Cardiac septum (tissue), 1 donor: ENCODE measurements at regions of chr3 and their contacts with region 1.

Region 1: GRCh38 chr3:138915503-138916498 is 31.1 kb downstream of the FOXL2 start:
- DNase-seq: peak; percentile 96

Region 2: DNA sequence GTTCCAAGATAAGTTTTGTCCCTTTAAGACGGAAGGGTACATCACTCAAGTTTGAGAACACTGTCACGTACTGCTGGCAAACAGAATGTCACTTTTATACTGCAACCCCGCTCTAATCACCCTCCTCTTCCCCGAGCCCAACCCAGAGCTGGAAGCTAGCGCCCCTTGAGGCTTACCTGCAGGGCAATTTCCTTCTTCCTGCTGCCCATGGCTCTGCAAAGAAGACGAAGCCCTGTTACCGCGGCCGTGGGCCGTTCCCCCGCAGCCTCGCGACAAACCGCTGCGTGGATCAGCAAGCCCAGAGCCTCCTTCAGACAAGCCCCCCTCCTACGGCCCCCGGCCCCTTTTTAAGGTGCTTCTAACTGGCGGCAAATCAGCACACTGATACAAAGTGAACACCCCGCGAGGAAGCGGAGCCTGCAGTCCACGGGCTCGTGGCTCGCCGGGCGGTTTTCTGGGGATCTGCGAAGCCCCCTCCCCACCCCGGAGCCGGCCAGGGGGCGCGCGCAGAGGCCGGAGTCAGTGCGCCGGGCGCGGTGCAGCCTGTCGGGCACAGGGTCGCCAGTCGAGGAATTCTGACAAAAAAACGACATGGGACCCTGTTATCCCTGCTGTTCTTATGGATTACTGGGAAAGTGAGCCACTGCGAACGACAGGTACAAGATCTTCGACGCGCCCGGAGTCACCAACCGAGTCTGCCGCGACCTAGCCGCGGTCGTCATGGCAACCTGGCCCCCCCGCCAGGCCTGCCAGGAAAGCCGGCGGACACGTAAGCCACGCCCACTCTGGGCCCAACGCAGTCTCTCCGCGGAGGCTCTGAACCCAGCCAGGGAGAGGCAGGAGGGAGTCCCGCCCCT is 586.4 kb before region 1 on chr3 and contains the start of gene NME9:
- intact Hi-C with region 1: loop called (anchors 10 kb)
- DNase-seq: peak; percentile 93
- total RNA-seq, gene NME9: not detected

Region 3: DNA sequence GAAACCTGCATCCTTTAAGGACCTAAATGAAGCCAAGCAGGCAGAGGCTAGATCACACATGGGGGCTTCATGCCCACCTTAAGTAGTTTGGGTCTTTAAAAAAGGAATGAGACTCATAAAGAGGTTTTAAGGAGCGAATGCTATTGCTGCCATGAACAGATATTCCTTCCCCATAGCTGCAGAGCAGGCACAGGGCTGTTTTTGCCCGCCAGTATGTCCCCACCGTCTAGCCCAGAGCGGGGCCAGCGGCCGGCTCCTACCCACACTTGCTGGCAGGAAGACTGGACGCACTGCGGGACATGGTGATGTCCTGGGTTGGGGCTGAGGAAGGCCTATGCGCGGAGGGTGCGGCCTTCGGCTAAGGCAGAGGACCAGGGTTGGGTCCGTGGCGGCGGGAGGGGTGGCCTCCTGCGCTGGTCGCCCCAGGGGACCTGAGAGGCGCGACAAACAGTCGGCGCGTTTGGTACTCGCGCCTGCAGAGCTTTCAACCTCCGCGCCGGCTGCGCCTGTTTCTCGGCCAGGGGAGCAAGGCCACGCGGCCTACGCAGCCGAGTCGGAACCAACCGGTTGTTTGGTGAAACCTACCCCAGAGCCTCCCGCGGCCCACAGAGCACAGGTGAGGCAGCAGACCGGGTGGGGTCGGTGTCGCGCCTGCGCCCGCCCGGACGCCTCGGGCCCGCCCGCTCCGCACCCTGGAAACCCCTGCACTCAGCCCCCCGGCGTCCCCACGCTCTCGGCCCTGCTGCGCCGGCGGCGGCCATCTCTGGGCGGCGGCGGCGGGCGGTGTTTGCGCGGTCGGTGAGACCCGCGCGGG is 307.3 kb before region 1 on chr3 and contains the start of gene FAIM:
- intact Hi-C with region 1: loop called (anchors 5 kb)
- DNase-seq: peak; percentile 83
- total RNA-seq, gene FAIM: 3.5 TPM

Region 4: DNA sequence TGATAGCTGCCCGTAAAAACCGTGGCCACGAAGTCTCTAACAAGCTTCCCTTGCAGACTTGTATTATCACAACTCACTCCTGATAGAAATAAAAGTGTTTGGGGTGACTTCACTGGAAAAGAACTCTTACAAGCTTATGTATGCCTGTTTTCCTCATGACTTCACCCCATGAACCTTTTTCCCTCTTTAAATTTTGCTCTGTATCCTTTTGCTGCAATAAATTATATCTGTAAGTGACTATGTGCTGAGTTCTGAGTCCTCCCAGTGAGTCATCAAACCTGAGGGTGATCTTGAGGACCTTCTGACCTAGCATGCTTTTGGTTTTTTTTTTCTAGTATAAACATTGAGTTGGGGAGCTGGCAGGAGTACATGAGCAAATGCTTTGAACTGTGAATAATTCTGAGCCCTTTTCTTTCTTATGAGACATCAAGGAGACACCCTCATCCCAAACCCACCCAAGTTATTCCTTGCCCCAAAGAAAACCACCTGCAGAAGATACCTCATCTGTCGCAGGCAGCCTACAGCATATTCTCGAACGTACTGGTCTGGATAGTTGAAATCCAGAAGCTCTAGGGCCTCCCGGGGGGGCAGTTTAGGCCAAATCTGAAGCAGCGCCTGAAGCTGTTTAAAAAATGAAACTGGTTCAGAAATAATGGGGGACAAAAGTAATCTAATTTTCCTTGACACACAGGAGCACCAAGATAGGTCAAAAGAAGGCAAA is 221.4 kb before region 1 on chr3:
- intact Hi-C with region 1: loop called (anchors 2 kb)
- DNase-seq: no peak

Region 5: DNA sequence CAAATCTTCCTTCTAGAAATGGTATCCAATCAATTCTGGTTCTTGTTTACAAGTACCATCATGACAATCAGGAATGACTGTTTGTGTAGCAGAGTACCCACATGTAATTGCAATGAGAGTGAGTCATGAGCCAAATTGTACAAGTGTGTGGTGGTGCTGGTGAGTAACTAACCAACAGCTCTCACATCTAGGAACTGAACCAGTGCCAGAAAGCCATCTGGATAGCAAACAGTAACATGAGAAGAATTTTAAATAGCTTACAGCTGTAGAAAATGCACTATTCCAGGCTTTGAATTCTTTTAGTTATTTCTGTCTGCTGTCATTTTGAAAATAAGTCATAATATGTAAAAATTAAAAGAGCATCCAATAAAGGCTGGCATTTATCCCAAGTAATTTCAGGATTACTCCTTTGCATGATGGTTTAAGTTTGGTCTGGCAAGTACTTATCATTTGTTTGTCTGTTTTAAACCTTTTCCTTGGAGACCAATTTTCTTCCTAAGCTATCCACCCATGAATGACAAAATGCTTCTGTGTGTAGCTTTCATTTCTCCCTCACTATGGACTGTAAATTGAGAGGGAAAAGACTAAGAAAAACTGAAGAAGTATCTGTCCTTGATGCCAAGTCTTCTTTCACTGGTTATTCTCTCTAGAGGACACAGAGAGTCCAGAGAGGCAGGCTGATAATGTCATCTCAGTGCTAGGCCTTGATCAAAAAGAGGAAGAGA is 141.1 kb before region 1 on chr3:
- intact Hi-C with region 1: loop called (anchors 5 kb)
- DNase-seq: no peak

Region 6: DNA sequence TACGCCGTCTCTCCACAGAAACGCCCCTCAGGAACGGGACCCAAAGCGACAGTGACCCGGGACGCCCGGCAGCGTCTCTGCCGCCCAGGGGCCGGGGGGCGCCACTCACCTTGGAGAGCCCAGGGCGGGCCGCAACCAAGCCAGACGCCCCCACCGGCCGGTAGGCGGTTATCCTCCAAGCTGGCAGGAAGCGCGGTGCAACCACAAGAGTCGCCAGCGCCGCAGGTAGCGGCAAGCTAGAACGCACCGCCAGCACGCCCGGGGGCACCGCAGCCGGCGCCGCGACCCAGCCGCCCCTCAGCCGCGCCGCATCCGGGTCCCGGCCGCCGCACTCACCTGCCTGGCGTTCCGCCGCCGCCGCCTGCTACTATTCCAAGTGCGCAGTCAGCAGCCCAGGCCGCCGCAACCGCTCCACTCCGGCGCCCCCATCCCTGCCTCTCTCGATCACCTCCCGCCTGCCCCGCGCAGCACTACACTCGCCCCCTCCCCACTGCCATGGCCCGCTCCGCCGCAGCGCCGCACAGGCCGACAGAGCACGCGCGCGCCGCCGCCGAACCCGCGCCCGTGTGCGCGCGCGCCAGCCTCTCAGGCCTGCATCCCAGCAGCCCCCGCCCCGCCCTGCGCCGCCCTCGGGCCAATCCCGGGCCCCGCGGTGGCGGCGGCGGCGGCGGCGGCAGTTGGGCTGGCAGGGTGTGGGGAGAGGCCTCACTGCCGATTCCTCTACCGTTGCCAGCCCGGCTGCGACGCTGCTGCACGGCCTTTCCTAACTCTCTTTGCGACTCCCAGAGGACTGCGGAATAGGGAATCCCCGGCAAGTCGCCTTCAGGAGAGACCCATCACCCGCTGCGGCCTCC is 81.2 kb before region 1 on chr3 and contains the start of gene PIK3CB:
- intact Hi-C with region 1: loop called (anchors 2 kb)
- DNase-seq: peak; percentile 93
- total RNA-seq, gene PIK3CB: 26.1 TPM